Thyroid gland (tissue), 4 donors: ENCODE measurements at regions of chr3 and their contacts with region 1.

Region 1: GRCh38 chr3:178325330-178325729 is 210.9 kb upstream of the KCNMB2 start:
- DNase-seq: no peak
- H3K4me3 ChIP-seq: no peak overlapping the region
- H3K27ac ChIP-seq: peak overlapping the region in 2 of 3 donors; percentile 1 to 10
- H3K4me1 ChIP-seq: peaks cover 7 to 22% of the 10 kb centered on the region in 2 donors
- H3K27me3 ChIP-seq: no peaks in the 10 kb centered on the region
- CTCF ChIP-seq: peak in 5 of 6 experiments; percentile 12 to 81 (median 58)
- POLR2A ChIP-seq: no peak

Region 2: GRCh38 chr3:177525987-177526712 is 799.2 kb before region 1 on chr3:
- intact Hi-C with region 1: loop called (anchors 10 kb)
- DNase-seq: no peak
- H3K4me3 ChIP-seq: no peak overlapping the region
- H3K27ac ChIP-seq: peak overlapping the region; percentile 21 to 41 (median 26)
- H3K4me1 ChIP-seq: peaks cover 16 to 32% of the 10 kb centered on the region in 2 donors
- H3K27me3 ChIP-seq: no peaks in the 10 kb centered on the region
- CTCF ChIP-seq: no peak
- POLR2A ChIP-seq: no peak